ENCODE measurements at regions of chr2 and their contacts with region 1.

Region 1: DNA sequence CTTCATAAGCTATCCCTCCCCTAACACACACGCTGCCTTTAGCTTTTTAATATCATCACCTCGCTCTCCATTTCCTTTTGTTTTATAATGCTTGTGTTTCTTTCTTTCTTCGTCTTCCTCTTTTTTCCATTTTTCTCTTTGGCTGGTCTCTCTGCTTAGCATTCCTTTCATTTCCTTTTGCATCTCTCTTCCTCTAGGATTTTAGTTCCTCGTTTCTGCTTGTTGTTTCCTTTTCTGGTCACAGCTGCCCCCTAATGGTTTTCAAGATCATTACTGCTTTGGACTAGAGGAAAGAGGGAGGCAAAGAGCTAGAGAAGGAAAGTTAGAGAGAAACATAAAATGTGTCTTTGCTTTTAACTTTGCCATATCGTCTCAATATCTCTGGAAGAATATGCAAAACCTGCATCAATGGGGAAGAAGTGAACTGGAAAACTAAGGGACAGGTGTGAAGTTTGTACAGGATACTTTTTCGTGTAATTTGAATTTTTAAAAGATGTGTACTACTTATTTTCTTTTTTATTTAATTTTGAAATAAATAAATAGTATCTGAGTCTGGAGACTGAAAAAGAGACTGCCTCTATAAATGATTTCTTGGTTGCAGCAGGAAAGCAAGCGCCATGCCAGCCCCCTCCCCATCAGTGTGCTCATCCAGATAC is 6.3 kb upstream of the NRP2 start:
- DNase-seq: peak; percentile 77
- H3K4me3 ChIP-seq: peak overlapping the region; percentile 51
- H3K27ac ChIP-seq: no peak overlapping the region
- H3K4me1 ChIP-seq: 0 out of 2 replicates have a peak, but pooled peaks cover 8% of the 10 kb centered on the region
- H3K27me3 ChIP-seq: no peaks in the 10 kb centered on the region

Region 2: DNA sequence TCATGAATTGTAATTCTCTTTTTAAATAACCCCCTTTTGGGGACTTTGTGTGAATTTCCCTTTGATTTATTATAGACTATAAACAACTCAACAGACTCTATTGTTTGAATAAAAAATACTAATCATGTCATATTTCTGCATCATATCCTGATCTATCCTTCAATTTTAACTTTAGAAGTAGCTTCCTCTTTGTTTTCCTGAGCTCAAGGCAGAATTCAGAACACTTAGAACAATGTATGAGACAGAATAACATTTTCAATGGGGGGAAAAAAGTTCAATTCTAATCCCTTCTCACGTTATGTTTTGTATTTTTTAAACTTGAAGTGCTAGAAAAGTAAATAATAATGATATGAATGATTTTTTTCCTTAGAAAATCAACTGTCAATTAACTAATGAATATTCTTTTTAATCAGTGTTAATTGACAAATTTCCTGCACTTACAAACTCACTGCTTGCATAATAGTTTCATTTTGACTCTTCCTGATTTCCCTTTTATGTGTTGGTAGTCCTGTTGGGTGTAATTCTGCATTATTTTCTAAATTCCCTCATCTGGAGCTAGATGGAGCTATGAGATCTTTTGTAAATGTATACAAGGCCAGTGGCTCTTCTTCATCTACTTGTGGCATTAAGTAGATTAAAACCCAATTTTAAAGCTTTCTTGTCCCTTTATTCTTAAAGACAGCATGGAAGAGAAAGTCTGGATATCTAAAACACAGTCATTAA is 804.6 kb before region 1 on chr2:
- in situ Hi-C with region 1: loop called (anchors 10 kb)
- DNase-seq: peak; percentile 63
- H3K4me3 ChIP-seq: no peak overlapping the region
- H3K27ac ChIP-seq: no peak overlapping the region
- H3K4me1 ChIP-seq: no peaks in the 10 kb centered on the region
- H3K27me3 ChIP-seq: no peaks in the 10 kb centered on the region

Measured in GM23248 (cell line).